ENCODE measurements at regions of chr6 and their contacts with region 1.

Region 1: GRCh38 chr6:26295691-26296555 is 69.1 kb upstream of the BTN3A2 start:
- DNase-seq: no peak
- H3K4me3 ChIP-seq: peak overlapping the region; percentile 19
- H3K4me3 Mint-ChIP-seq: peak overlapping the region in 4 of 7 donors; percentile 27 to 52 (median 43)
- H3K27ac ChIP-seq: peak overlapping the region; percentile 78
- H3K27ac Mint-ChIP-seq: peak overlapping the region in 1 of 8 donors; percentile 23
- H3K4me1 ChIP-seq: no peaks in the 10 kb centered on the region
- H3K4me1 Mint-ChIP-seq: peaks cover 1 to 7% (median 4%) of the 10 kb centered on the region in 3 donors
- H3K27me3 ChIP-seq: no peaks in the 10 kb centered on the region
- H3K27me3 Mint-ChIP-seq: no peaks in the 10 kb centered on the region

Region 2: DNA sequence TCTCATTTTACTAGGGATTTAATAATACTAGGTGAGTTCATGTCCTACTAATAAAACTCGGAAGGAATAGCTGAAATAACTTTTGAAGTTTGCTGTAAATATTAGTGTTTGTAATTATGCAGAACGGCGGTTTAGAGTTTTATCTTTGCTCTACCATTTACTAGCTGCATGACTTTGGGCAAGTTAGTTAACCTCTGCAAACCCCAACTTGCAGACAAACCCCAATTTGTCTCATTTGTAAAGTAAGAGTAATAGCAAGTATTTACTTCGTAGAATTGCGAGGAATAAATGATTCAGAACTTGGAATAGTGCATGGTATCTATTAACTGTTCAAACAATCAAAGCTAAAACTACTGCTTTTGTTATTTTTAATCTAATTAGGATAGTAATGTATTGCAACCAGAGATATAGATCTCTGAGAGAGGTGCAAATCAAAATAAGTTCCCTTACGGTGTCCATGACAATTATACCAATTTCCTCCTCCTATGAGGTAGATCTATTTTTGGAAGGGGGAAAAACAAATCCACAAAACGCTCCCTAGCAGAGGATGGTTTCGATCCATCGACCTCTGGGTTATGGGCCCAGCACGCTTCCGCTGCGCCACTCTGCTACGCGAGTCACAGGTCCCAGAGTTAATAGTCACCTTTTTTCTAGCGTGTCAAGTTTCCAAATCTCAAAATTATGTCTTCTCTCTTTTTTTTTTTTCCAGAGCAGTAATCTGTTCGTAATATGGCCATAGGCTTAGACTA is 34.0 kb after region 1 on chr6:
- CTCF ChIA-PET with region 1: no interaction called
- POLR2A ChIA-PET with region 1: interaction called, 10 read pairs
- DNase-seq: peak; percentile 23 to 65 (median 56)
- H3K4me3 ChIP-seq: no peak overlapping the region
- H3K4me3 Mint-ChIP-seq: peak overlapping the region; percentile 51 to 85 (median 82)
- H3K27ac ChIP-seq: peak overlapping the region; percentile 41
- H3K27ac Mint-ChIP-seq: peak overlapping the region in 7 of 8 donors; percentile 64 to 93 (median 81)
- H3K4me1 ChIP-seq: peaks cover 23% of the 10 kb centered on the region
- H3K4me1 Mint-ChIP-seq: peaks cover 36 to 61% (median 55%) of the 10 kb centered on the region in 3 donors
- H3K27me3 ChIP-seq: peaks cover 17% of the 10 kb centered on the region
- H3K27me3 Mint-ChIP-seq: peaks cover 34 to 38% of the 10 kb centered on the region in 2 donors

Region 3: GRCh38 chr6:26613689-26614683 is 318.1 kb after region 1 on chr6:
- CTCF ChIA-PET with region 1: no interaction called
- POLR2A ChIA-PET with region 1: no interaction called
- DNase-seq: peak in 1 of 5 donors; percentile 50
- H3K4me3 ChIP-seq: peak overlapping the region; percentile 54
- H3K4me3 Mint-ChIP-seq: peak overlapping the region; percentile 70 to 87 (median 74)
- H3K27ac ChIP-seq: no peak overlapping the region
- H3K27ac Mint-ChIP-seq: peak overlapping the region in 3 of 8 donors; percentile 3 to 57 (median 47)
- H3K4me1 ChIP-seq: peaks cover 14% of the 10 kb centered on the region
- H3K4me1 Mint-ChIP-seq: peaks cover 14 to 19% (median 17%) of the 10 kb centered on the region in 3 donors
- H3K27me3 ChIP-seq: peaks cover 20% of the 10 kb centered on the region
- H3K27me3 Mint-ChIP-seq: peaks cover 39 to 57% of the 10 kb centered on the region in 2 donors

Measured in CD8-positive, alpha-beta memory T cell (primary cell).